HepG2 (cell line): ENCODE measurements at regions of chr2 and their contacts with region 1.

Region 1: GRCh38 chr2:32051836-32052439 is 11.4 kb upstream of the SPAST start:
- DNase-seq: no peak
- ATAC-seq: peak; percentile 70
- H3K4me3 ChIP-seq: peak overlapping the region in 1 of 3 experiments; percentile 3; a peak in 2 of 6 replicates
- H3K27ac ChIP-seq: no peak overlapping the region
- H3K4me1 ChIP-seq: peaks cover 30% of the 10 kb centered on the region
- H3K27me3 ChIP-seq: no peaks in the 10 kb centered on the region
- CTCF ChIP-seq: no peak
- EP300 ChIP-seq: no peak
- POLR2A ChIP-seq: no peak
- RAD21 ChIP-seq: no peak

Region 2: GRCh38 chr2:32039447-32040219 is 12.3 kb before region 1 on chr2 and contains the start of gene DPY30:
- CTCF ChIA-PET with region 1: no interaction called
- POLR2A ChIA-PET with region 1: interaction called, 10 read pairs
- in situ Hi-C with region 1: no loop called
- intact Hi-C with region 1: no loop called
- DNase-seq: peak; percentile 91
- ATAC-seq: peak; percentile 95
- H3K4me3 ChIP-seq: peak within 1 kb of the TSS; percentile 72 to 96 (median 84)
- H3K27ac ChIP-seq: peak within 1 kb of the TSS; percentile 65
- H3K4me1 ChIP-seq: peaks cover 21% of the 10 kb centered on the region
- H3K27me3 ChIP-seq: no peaks in the 10 kb centered on the region; a peak in 1 of 5 replicates
- CTCF ChIP-seq: peak; percentile 60
- EP300 ChIP-seq: 0 out of 4 replicates have a peak, but pooled peaks of 1 of the 2 experiments have one; percentile 21
- POLR2A ChIP-seq: peak; percentile 98 to 100
- RAD21 ChIP-seq: peak; percentile 47
- total RNA-seq, gene DPY30: 118 and 165 TPM in 2 replicates